Esophagus squamous epithelium (tissue), 5 donors: ENCODE measurements at regions of chr9 and their contacts with region 1.

Region 1: DNA sequence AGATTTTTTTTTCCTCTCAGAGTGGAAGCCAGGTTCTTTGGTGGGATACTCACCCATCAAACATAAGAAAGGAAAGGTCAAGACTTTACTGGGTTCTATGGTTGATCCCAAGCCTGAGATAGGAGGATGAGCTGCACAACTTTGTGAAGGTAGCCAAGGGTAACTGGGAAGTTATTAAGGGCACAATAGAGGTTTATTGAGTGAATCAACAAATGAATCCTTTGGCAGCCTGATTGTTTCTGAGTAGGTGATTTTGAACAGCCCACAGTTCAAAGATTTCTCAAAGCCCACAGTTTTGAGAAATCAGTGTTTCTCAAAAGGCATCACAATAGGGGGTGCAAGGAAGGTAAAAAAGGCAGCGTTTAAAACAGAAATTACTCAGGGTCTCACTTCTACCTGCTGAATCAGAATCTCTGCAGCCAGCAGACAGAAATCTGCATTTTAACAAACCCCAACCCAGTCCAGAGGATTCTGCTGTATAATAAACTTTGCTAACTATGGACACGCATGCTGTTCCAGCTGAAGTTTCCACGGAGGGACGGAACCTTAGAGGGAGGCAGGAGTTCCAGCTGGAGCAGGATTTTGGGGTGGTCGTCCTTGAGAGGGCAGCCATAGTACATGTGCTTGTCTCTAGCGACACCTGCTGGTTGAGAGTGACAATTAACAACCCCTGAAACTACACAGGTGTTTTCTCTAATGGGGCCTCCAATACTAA is 32.7 kb upstream of the FSD1L start:
- DNase-seq: no peak
- H3K4me3 ChIP-seq: no peak overlapping the region
- H3K27ac ChIP-seq: no peak overlapping the region
- H3K4me1 ChIP-seq: peaks cover 0 to 10% (median 0%) of the 10 kb centered on the region in 3 donors
- H3K27me3 ChIP-seq: no peaks in the 10 kb centered on the region
- CTCF ChIP-seq: peak; percentile 57 to 87 (median 80)
- POLR2A ChIP-seq: no peak

Region 2: DNA sequence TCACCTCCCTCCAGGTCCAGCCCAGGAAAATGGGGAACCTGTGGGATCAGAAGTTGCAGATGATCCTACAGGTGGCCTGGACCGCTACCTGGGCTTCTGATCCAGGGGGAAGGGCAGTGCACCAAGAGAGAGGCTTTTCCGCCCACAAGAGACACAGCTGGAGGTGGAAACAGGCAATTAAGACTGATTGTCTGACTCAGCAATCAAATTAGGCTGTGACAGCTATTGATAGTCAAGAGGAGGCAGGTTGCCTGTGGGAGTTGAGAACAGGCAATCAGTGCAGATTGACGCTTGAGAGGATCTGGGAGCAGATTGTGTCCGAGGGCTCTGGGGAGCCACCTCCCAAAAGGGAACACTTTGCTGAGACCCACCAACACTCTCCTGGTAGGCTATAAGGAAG is 241.8 kb before region 1 on chr9:
- intact Hi-C with region 1: loop called (anchors 10 kb)
- DNase-seq: no peak
- H3K4me3 ChIP-seq: no peak overlapping the region
- H3K27ac ChIP-seq: no peak overlapping the region
- H3K4me1 ChIP-seq: no peaks in the 10 kb centered on the region
- H3K27me3 ChIP-seq: no peaks in the 10 kb centered on the region
- CTCF ChIP-seq: no peak
- POLR2A ChIP-seq: no peak

Region 3: GRCh38 chr9:105191508-105192121 is 223.5 kb before region 1 on chr9:
- intact Hi-C with region 1: no loop called
- DNase-seq: no peak
- H3K4me3 ChIP-seq: no peak overlapping the region
- H3K27ac ChIP-seq: no peak overlapping the region
- H3K4me1 ChIP-seq: peaks cover 0 to 9% (median 4%) of the 10 kb centered on the region in 3 donors
- H3K27me3 ChIP-seq: no peaks in the 10 kb centered on the region
- CTCF ChIP-seq: no peak
- POLR2A ChIP-seq: no peak

Region 4: DNA sequence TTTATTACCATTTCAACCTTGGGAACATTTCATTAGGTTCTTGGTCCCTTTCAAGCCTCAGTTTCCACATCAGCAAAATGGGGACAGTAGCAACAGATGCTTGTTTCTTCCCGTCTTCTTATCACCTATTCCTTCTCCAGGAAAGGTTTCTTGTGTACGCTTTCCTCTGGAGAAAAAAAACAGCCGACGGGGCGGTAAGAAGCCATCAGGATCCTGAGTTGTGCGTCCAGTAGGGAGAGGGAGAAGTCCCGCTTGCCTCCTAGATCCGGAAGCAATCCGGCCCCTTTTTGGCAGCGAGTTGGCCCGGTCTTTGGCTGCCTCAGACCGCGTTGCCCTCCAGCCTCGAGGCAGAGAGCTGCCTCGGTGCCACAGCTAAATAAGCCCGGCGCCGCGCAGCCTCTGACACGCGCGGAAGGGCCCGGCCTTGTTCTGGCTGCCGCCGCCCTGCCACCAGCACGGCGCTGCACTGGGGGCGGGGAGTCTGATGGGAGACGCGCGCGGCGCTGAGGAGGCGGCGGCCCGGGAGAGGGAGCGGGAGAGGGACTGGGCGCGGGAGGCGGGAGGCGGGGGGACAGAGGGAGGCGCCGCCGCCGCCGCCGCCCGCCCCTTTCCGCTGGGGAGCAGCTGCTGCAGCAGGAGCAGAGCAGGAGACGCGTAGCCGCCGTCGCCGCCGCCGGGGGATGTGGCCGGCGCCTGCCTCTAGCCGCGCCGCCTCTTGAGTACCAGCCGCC is 170.9 kb before region 1 on chr9 and contains the start of gene SLC44A1:
- intact Hi-C with region 1: loop called (anchors 10 kb)
- DNase-seq: peak; percentile 69
- H3K4me3 ChIP-seq: peak within 1 kb of the TSS; percentile 82 to 96 (median 88)
- H3K27ac ChIP-seq: peak within 1 kb of the TSS; percentile 88 to 95 (median 91)
- H3K4me1 ChIP-seq: peaks cover 3 to 51% (median 3%) of the 10 kb centered on the region in 3 donors
- H3K27me3 ChIP-seq: no peaks in the 10 kb centered on the region
- CTCF ChIP-seq: peak in 3 of 6 experiments; percentile 4 to 41 (median 8)
- POLR2A ChIP-seq: peak in 2 of 4 donors; percentile 83 to 89
- total RNA-seq, gene SLC44A1: 19.9 to 52.9 (median 37.8) TPM